GM13976 (cell line): ENCODE measurements at regions of chr1 and their contacts with region 1.

Region 1: GRCh38 chr1:89812992-89813391 is 7.8 kb upstream of the LRRC8D start:
- DNase-seq: no peak
- CTCF ChIP-seq: no peak

Region 2: GRCh38 chr1:89987170-89987819 is 174.3 kb after region 1 on chr1:
- in situ Hi-C with region 1: loop called (anchors 5 kb)
- DNase-seq: peak; percentile 78
- CTCF ChIP-seq: peak; percentile 71

Region 3: GRCh38 chr1:90012305-90012704 is 199.3 kb after region 1 on chr1:
- in situ Hi-C with region 1: no loop called
- DNase-seq: no peak
- CTCF ChIP-seq: no peak